Activated CD8-positive, alpha-beta T cell treated with anti-CD3 and anti-CD28 coated beads, Interleukin-2, amount 10 ng/mL, durations not matched to agents 7 days and 5 days (primary cell): ENCODE measurements at regions of chr10 and their contacts with region 1.

Region 1: DNA sequence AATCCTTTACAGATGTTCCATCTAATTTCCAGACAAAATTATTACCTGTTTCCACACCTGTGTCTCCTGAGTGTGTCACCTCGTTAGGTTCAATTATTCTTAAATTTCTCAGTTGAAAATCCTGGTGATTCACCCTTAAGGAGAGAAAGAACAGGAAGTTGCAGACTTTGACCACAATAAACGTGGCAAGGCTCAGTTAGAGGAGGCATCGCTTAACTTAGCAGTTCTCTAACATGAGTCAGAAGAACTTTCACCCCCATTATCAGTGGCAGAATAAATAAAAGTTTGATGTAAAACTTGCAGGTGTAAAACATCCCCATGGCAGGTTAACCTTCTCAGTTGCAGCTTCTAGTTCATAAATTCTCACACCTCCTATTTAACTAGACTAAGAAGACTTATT is 8.3 kb downstream of the XPNPEP1 start:
- DNase-seq: peak; percentile 67
- ATAC-seq: peak; percentile 83
- H3K4me3 Mint-ChIP-seq: peak overlapping the region; percentile 58
- H3K27ac Mint-ChIP-seq: peak overlapping the region; percentile 85
- H3K4me1 Mint-ChIP-seq: peaks cover 91% of the 10 kb centered on the region
- H3K27me3 Mint-ChIP-seq: no peaks in the 10 kb centered on the region

Region 2: GRCh38 chr10:109534193-109534592 is 380.8 kb before region 1 on chr10:
- CTCF ChIA-PET with region 1: no interaction called
- POLR2A ChIA-PET with region 1: no interaction called
- DNase-seq: no peak
- ATAC-seq: no peak
- H3K4me3 Mint-ChIP-seq: no peak overlapping the region
- H3K27ac Mint-ChIP-seq: no peak overlapping the region
- H3K4me1 Mint-ChIP-seq: no peaks in the 10 kb centered on the region
- H3K27me3 Mint-ChIP-seq: no peaks in the 10 kb centered on the region

Region 3: GRCh38 chr10:109934958-109935706 is 20.2 kb after region 1 on chr10:
- CTCF ChIA-PET with region 1: interaction called, 4 read pairs
- POLR2A ChIA-PET with region 1: interaction called, 12 read pairs
- DNase-seq: peak; percentile 36
- ATAC-seq: peak; percentile 66
- H3K4me3 Mint-ChIP-seq: peak overlapping the region; percentile 70
- H3K27ac Mint-ChIP-seq: peak overlapping the region; percentile 94
- H3K4me1 Mint-ChIP-seq: peaks cover 36% of the 10 kb centered on the region
- H3K27me3 Mint-ChIP-seq: no peaks in the 10 kb centered on the region